Activated naive CD8-positive, alpha-beta T cell treated with anti-CD3 and anti-CD28 coated beads, Interleukin-2, amount 10 ng/mL, durations not matched to agents 7 days and 5 days (primary cell): ENCODE measurements at regions of chr4 and their contacts with region 1.

Region 1: DNA sequence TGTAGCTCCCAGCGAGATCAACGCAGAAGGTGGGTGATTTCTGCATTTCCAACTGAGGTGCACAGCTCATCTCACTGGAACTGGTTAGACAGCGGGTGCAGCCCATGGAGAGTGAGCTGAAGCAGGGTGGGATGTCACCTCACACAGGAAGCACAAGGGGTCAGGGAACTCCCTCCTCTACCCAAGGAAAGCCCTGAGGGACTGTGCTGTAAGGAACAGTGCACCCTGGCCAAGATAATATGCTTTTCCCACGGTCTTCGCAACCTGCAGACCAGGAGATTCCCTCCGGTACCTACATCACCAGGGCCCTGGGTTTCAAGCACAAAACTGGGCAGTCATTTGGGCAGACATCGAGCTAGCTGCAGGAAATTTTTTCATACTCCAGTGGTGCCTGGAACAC is 216.4 kb upstream of the TET2 start:
- DNase-seq: no peak
- ATAC-seq: no peak
- H3K4me3 Mint-ChIP-seq: peak overlapping the region; percentile 36
- H3K27ac Mint-ChIP-seq: peak overlapping the region; percentile 89
- H3K4me1 Mint-ChIP-seq: peaks cover 40% of the 10 kb centered on the region
- H3K27me3 Mint-ChIP-seq: no peaks in the 10 kb centered on the region

Region 2: DNA sequence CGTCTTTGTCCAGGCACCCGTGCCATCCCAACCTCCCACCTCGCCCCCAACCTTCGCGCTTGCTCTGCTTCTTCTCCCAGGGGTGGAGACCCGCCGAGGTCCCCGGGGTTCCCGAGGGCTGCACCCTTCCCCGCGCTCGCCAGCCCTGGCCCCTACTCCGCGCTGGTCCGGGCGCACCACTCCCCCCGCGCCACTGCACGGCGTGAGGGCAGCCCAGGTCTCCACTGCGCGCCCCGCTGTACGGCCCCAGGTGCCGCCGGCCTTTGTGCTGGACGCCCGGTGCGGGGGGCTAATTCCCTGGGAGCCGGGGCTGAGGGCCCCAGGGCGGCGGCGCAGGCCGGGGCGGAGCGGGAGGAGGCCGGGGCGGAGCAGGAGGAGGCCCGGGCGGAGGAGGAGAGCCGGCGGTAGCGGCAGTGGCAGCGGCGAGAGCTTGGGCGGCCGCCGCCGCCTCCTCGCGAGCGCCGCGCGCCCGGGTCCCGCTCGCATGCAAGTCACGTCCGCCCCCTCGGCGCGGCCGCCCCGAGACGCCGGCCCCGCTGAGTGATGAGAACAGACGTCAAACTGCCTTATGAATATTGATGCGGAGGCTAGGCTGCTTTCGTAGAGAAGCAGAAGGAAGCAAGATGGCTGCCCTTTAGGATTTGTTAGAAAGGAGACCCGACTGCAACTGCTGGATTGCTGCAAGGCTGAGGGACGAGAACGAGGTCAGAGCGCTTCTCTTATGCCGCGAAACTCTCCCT is 216.1 kb after region 1 on chr4 and contains the start of gene TET2:
- POLR2A ChIA-PET with region 1: interaction called, 10 read pairs
- DNase-seq: peak; percentile 84
- ATAC-seq: peak; percentile 93
- H3K4me3 Mint-ChIP-seq: peak within 1 kb of the TSS; percentile 95
- H3K27ac Mint-ChIP-seq: peak within 1 kb of the TSS; percentile 99
- H3K4me1 Mint-ChIP-seq: peaks cover 24% of the 10 kb centered on the region
- H3K27me3 Mint-ChIP-seq: no peaks in the 10 kb centered on the region
- total RNA-seq, gene TET2: 29.2 to 31.4 TPM